Psoas muscle (tissue), 8 donors: ENCODE measurements at regions of chr10 and their contacts with region 1.

Region 1: GRCh38 chr10:103859161-103860086 is 4.0 kb upstream of the SH3PXD2A start:
- DNase-seq: no peak
- ATAC-seq: peak; percentile 62 to 79 (median 71)
- H3K4me3 ChIP-seq: no peak overlapping the region
- H3K27ac ChIP-seq: no peak overlapping the region
- H3K4me1 ChIP-seq: peaks cover 8% of the 10 kb centered on the region
- H3K27me3 ChIP-seq: no peaks in the 10 kb centered on the region
- CTCF ChIP-seq: peak; percentile 76

Region 2: DNA sequence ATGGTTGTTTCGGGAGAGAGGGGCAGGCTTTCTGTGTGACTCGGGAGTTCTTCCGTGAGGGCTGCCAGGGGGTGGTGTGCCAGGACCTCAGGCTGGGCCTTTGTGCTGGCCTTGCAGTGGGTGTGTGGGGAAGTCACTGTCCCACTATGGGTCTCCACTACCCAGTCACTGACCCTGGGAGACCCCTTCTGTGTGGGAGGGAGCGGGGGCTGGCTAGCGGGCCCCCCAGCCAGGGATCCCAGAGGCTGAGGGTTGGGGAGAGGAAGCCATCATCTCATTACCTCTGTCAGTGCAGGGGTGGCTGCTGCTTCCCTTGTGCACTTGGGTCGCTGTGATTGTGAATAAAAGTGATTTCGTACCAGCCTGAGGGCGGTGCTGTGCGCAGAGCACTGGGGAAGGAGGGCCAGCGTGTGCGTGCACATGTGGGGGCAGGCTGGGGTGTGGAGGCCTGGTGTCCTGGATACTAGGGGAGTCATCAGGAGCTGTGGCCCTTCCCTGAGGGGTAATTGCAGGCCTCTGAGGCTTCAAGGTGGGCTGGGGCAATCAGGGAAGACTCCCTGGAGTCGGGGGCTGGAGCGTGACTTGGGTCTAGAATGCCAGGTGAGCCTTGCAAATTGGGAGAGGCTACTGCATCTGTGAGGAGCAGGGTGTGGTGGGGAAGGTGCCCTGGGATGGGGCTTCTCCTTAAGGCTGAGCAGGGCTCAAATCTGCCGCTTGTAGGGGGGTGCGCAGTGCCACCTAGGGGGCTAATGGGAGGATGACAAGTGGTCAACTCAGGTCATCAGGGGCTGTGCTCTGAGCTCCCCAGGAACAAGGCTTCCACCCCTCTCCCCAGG is 267.0 kb before region 1 on chr10:
- intact Hi-C with region 1: loop called in 1 of 2 experiments (anchors 10 kb)
- DNase-seq: peak; percentile 51 to 69
- ATAC-seq: peak; percentile 69 to 85 (median 80)
- H3K4me3 ChIP-seq: no peak overlapping the region
- H3K27ac ChIP-seq: no peak overlapping the region
- H3K4me1 ChIP-seq: no peaks in the 10 kb centered on the region
- H3K27me3 ChIP-seq: no peaks in the 10 kb centered on the region
- CTCF ChIP-seq: peak; percentile 62

Region 3: GRCh38 chr10:103605359-103606095 is 253.9 kb before region 1 on chr10:
- intact Hi-C with region 1: loop called in 1 of 2 experiments (anchors 10 kb)
- DNase-seq: peak; percentile 55 to 68
- ATAC-seq: peak; percentile 64 to 92 (median 84)
- H3K4me3 ChIP-seq: no peak overlapping the region
- H3K27ac ChIP-seq: no peak overlapping the region
- H3K4me1 ChIP-seq: peaks cover 4% of the 10 kb centered on the region
- H3K27me3 ChIP-seq: no peaks in the 10 kb centered on the region
- CTCF ChIP-seq: peak; percentile 75

Region 4: DNA sequence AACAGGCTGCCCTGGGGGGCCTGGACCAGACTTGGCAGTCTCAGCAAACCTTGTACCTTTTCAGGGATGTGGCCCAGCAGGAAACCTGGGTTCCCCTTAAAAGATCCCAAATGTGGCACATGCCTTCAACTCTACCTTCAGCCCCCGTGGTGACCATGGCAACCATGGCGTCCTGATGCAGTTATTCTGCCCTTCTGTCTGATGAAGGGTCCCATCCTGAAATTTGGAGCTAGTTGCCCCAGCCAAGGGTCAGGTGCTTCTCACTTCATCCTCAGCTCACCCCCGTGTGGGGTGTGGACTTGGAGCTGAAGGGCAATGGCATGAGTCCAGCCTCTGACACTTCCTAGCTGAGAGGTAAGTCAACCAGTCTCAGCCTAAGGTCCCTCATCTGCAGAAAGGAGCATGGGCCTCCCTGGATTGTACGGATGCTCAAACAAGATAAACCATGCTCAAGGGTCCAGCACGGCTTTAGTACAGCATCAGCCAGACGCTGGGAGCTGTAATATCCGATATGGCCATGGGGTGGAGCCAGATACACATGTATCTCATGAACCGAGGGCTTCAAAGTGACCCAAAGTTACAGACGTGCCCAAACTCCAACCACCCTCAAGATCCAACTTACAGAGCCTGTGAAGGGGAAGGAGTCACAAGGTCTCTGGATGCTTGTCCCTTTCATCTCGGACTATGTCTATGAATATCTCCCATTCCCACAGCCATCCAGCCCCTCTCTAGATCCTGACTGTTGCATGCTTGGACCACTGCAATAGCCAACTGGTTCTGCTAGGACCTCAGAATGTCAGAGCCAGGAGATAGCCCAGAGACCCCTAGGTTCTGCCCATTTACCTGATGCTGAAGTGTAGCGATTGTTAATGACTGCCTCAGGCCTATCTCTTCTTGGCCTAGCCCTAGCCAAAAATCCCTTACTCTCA is 146.6 kb before region 1 on chr10:
- intact Hi-C with region 1: loop called (anchors 1 to 2 kb)
- DNase-seq: peak; percentile 75 to 87
- ATAC-seq: peak; percentile 87 to 96 (median 90)
- H3K4me3 ChIP-seq: no peak overlapping the region
- H3K27ac ChIP-seq: no peak overlapping the region
- H3K4me1 ChIP-seq: peaks cover 4% of the 10 kb centered on the region
- H3K27me3 ChIP-seq: no peaks in the 10 kb centered on the region
- CTCF ChIP-seq: peak; percentile 95

Region 5: DNA sequence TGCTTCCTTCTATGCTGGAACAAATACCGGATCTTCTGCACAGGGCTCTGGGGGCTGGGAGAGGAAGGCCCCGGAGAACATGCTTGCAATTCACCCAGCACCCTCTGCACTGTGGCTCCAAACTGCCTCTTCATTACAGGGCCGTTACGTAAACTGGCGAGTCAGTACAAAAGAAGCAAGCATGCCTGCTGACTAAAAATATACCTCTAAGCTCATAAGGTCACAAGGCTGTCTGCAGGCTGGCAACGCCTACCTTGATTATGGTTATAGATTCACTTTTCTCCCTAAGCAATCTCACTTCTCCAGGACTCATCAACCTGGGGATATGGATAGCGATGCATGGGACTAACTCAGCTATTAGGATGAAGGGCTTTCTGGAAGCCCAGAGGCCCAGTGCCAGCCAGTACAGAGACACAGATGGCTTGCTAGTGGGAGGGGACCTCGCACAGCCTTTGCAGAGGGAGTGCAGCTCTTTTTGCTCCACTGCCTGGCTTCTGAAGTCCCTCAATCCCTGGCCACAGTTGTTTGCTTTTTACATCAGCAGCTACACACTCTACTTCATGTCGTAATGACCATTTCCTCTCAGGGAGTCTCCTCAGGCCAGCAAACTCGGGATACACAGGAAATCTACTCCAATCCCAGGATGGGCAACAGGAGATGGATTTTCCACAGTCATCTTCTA is 100.2 kb before region 1 on chr10:
- intact Hi-C with region 1: loop called in 1 of 2 experiments (anchors 1 kb)
- DNase-seq: peak; percentile 45 to 75
- ATAC-seq: peak; percentile 86 to 90 (median 87)
- H3K4me3 ChIP-seq: no peak overlapping the region
- H3K27ac ChIP-seq: peak overlapping the region; percentile 99
- H3K4me1 ChIP-seq: peaks cover 80% of the 10 kb centered on the region
- H3K27me3 ChIP-seq: no peaks in the 10 kb centered on the region
- CTCF ChIP-seq: no peak

Region 6: GRCh38 chr10:103789771-103790201 is 69.6 kb before region 1 on chr10:
- intact Hi-C with region 1: no loop called
- DNase-seq: no peak
- ATAC-seq: no peak
- H3K4me3 ChIP-seq: no peak overlapping the region
- H3K27ac ChIP-seq: no peak overlapping the region
- H3K4me1 ChIP-seq: peaks cover 26% of the 10 kb centered on the region
- H3K27me3 ChIP-seq: no peaks in the 10 kb centered on the region
- CTCF ChIP-seq: no peak